ENCODE measurements at regions of chr15 and their contacts with region 1.

Region 1: GRCh38 chr15:80695104-80695910 is at the start of gene ABHD17C:
- DNase-seq: peak in 4 of 5 donors; percentile 23 to 45 (median 36)
- H3K4me3 ChIP-seq: peak within 1 kb of the TSS; percentile 30 to 59
- H3K4me3 Mint-ChIP-seq: peak within 1 kb of the TSS; percentile 92 to 96 (median 94)
- H3K27ac ChIP-seq: peak within 1 kb of the TSS; percentile 0
- H3K27ac Mint-ChIP-seq: peak within 1 kb of the TSS; percentile 73 to 94 (median 88)
- H3K4me1 ChIP-seq: peaks cover 16% of the 10 kb centered on the region
- H3K4me1 Mint-ChIP-seq: peaks cover 15 to 27% (median 20%) of the 10 kb centered on the region in 4 donors
- H3K27me3 ChIP-seq: no peaks in the 10 kb centered on the region
- H3K27me3 Mint-ChIP-seq: peaks cover 0 to 2% of the 10 kb centered on the region in 2 donors
- total RNA-seq, gene ABHD17C: 3.6 to 3.8 TPM

Region 2: DNA sequence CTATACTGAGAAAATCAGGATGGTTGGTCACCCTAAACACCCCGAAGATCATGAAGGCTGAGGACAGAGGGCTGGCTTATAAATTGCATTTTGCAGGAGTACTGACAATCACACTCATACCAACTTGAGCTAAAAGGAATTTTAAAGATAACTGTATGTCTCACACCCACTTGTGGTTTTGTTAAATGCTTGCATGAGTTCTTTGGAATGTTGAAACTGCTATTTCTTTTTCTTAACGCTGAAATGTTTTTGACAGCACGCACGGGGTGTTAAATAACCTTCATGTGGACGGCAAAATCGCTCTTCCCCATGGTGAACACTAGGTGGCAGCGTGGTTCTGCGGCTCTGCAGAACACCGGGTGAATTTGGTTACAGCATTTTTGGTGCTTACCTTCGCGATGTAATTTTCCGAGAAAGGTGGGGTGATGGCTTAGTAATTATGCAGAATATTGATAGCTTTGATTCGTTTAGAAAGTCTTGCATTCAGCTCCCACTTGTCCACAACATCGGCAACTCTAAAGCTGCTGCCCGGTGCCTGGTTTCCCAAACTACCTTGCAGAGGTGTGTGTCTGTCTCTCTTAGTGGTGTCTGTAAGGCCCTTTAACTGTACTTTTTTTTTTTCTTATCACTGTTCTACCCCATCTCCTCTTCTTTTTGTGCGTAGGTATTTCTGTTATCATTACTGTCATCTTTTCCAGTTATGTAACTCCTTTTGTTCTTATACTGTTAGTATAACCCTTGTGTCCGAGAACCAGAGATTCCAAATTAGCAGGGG is 239.5 kb before region 1 on chr15:
- CTCF ChIA-PET with region 1: no interaction called
- POLR2A ChIA-PET with region 1: no interaction called
- intact Hi-C with region 1: loop called (anchors 10 kb)
- DNase-seq: peak in 4 of 5 donors; percentile 52 to 55 (median 54)
- H3K4me3 ChIP-seq: no peak overlapping the region
- H3K4me3 Mint-ChIP-seq: peak overlapping the region in 1 of 8 donors; percentile 25
- H3K27ac ChIP-seq: no peak overlapping the region
- H3K27ac Mint-ChIP-seq: no peak overlapping the region
- H3K4me1 ChIP-seq: no peaks in the 10 kb centered on the region
- H3K4me1 Mint-ChIP-seq: peaks cover 0 to 6% (median 1%) of the 10 kb centered on the region in 4 donors
- H3K27me3 ChIP-seq: peaks cover 3% of the 10 kb centered on the region
- H3K27me3 Mint-ChIP-seq: peaks cover 8 to 17% of the 10 kb centered on the region in 2 donors

Region 3: DNA sequence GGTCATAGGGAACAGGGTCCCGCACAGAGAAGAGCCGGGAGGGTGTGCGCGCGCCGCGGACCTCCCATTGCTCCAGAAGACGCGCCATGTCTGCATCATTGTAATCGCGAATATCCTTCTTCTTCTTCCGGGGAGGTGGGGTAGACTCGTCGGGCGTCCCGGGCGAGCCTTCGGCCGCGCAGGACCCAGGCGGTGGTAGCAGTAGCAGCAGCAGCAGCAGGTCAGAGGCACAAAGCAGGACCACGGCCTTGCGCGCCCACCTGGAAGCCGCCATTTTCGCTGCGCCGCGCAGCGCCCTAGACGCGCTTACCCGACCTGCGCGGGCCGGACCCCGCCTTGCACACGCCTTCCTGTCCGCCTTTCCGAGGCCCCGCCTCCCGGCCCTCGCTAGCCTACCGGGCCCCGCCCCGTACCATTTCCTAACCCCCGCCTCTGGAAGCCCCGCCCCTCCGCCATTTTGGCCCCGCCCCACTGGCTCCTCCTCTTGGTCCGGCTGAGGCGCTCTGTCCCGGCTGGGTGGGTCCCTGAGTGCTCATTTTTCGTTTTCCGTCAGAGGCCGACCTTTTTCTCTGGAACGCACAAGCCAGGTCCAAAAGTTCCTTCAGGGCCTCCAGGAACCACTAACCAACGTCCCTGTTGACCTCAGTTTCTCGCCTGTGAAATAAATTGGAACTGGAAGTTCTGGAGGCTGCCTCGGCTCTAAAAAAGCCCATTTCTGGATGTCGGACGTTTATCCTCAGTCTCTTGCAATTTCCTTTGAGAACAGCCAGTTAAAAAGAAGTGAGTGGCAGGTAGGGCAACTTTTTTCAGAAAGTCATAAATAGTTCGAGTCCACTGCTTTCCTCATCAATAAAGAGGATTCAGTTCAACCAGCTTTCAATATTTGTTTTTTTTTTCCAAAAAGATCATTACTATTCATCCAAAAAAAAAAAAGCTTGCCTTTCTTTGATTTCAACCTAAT is 294.5 kb after region 1 on chr15 and contains the start of gene MESD:
- CTCF ChIA-PET with region 1: no interaction called
- POLR2A ChIA-PET with region 1: no interaction called
- intact Hi-C with region 1: loop called (anchors 10 kb)
- DNase-seq: peak; percentile 92 to 95 (median 94)
- H3K4me3 ChIP-seq: peak within 1 kb of the TSS; percentile 54 to 97
- H3K4me3 Mint-ChIP-seq: peak within 1 kb of the TSS; percentile 91 to 99 (median 99)
- H3K27ac ChIP-seq: peak within 1 kb of the TSS; percentile 79
- H3K27ac Mint-ChIP-seq: peak within 1 kb of the TSS; percentile 95 to 99 (median 99)
- H3K4me1 ChIP-seq: peaks cover 60% of the 10 kb centered on the region
- H3K4me1 Mint-ChIP-seq: peaks cover 38 to 71% (median 56%) of the 10 kb centered on the region in 4 donors
- H3K27me3 ChIP-seq: no peaks in the 10 kb centered on the region
- H3K27me3 Mint-ChIP-seq: no peaks in the 10 kb centered on the region
- total RNA-seq, gene MESD: 43.3 to 44.6 TPM

Region 4: DNA sequence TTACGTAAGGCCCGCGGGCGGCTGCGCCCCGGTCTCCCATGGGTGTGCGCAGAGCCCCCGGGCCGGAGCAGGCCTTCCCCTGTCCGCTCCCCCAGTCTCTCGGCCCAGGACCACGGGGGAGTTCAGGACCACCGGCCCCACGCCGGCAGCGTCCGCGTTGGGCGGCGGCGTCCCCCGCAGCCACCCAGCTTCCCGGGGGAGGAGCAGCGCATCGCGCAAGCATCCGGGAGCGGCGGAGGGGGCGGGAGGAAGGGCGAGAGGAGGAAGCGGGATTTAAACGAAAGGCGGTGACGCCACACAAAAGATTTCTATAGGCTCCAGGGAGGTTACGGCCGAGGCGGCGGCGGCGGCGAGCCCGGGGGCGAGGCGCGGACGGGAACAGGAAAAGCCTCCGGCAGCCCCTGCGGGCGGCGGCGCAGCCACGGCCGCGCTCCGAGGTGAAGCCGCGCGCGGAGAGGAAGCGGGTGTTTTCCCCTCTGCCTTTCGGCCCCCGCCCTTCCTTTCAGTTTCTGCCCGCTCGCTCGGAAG is 305.4 kb after region 1 on chr15 and contains the start of gene TLNRD1:
- CTCF ChIA-PET with region 1: no interaction called
- POLR2A ChIA-PET with region 1: interaction called, 10 read pairs
- intact Hi-C with region 1: no loop called
- DNase-seq: peak; percentile 85 to 89 (median 87)
- H3K4me3 ChIP-seq: peak within 1 kb of the TSS; percentile 39 to 91
- H3K4me3 Mint-ChIP-seq: peak within 1 kb of the TSS; percentile 93 to 98 (median 96)
- H3K27ac ChIP-seq: peak within 1 kb of the TSS; percentile 95
- H3K27ac Mint-ChIP-seq: peak within 1 kb of the TSS; percentile 97 to 99 (median 98)
- H3K4me1 ChIP-seq: peaks cover 42% of the 10 kb centered on the region
- H3K4me1 Mint-ChIP-seq: peaks cover 34 to 63% (median 53%) of the 10 kb centered on the region in 4 donors
- H3K27me3 ChIP-seq: no peaks in the 10 kb centered on the region
- H3K27me3 Mint-ChIP-seq: peaks cover 0 to 1% of the 10 kb centered on the region in 2 donors
- total RNA-seq, gene TLNRD1: 29.7 to 29.8 TPM